ENCODE measurements at regions of chrX and their contacts with region 1.

Region 1: DNA sequence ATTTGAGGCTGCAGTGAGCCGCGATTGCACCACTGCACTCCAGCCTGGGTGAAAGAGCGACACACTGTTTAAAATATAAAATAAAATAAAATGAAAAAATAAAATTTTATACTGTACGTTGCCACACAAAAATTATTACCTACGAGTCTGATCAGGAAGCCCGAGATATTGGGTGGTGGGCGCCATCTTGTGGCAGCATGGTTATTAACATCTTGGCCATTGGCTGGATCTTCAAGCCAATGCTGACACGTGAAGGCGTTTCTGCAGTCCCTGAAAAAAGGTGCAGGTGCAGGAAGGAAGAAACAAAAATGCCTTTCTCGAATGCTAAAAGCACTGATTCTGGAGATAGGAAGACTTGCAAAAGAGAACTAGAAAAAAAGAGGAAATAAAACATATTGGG is 4.9 kb upstream of the TLR8 start:
- DNase-seq: peak; percentile 70
- ATAC-seq: peak; percentile 65
- H3K4me3 ChIP-seq: no peak overlapping the region
- H3K4me3 Mint-ChIP-seq: no peak overlapping the region
- H3K27ac ChIP-seq: no peak overlapping the region
- H3K27ac Mint-ChIP-seq: no peak overlapping the region
- H3K4me1 ChIP-seq: peaks cover 0 to 7% of the 10 kb centered on the region in 2 donors
- H3K4me1 Mint-ChIP-seq: peaks cover 5% of the 10 kb centered on the region
- H3K27me3 ChIP-seq: no peaks in the 10 kb centered on the region
- H3K27me3 Mint-ChIP-seq: no peaks in the 10 kb centered on the region
- CTCF ChIP-seq: peak; percentile 67

Region 2: GRCh38 chrX:12814420-12814819 is 87.1 kb before region 1 on chrX:
- CTCF ChIA-PET with region 1: interaction called, 159 read pairs
- POLR2A ChIA-PET with region 1: no interaction called
- intact Hi-C with region 1: loop called (anchors 1 kb)
- DNase-seq: peak; percentile 70
- ATAC-seq: peak; percentile 68
- H3K4me3 ChIP-seq: no peak overlapping the region
- H3K4me3 Mint-ChIP-seq: no peak overlapping the region
- H3K27ac ChIP-seq: no peak overlapping the region
- H3K27ac Mint-ChIP-seq: no peak overlapping the region
- H3K4me1 ChIP-seq: no peaks in the 10 kb centered on the region
- H3K4me1 Mint-ChIP-seq: no peaks in the 10 kb centered on the region
- H3K27me3 ChIP-seq: no peaks in the 10 kb centered on the region
- H3K27me3 Mint-ChIP-seq: no peaks in the 10 kb centered on the region
- CTCF ChIP-seq: peak; percentile 68